PC-3 (cell line): ENCODE measurements at regions of chr12 and their contacts with region 1.

Region 1: DNA sequence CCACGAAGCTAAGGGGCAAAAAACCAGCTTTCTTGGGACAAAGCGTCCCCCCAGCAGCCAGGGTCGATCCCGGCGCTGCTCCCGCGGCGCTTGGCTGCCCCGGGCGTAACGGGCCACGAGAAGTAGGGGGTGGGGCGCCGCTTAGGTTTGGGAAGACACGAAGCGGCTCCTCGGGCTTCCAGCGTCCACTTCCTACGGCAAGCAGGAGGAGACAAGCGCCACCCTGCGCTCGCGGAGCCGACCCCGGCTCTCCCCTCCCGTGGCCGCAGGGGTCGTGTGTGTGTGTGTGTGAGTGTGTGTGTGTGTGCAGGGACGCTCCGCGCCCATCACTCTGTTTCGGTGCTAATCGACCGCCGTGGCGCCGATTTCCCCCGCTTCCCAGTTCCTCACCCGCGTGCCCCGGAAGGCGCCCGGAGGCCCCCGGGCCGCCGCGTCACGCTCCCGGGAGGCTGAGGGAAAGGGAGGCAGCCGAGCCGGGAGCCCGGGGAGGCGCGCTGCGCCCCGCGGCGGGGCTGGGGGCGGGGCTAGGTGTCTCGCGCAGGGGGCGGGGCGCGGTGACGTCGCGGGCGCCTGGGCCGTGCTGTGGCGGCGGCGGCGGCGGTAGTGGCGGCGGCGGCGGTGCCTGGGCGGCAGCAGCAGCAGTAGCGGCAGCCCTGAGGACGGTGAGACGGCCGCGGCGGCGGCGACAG is at the start of gene ERC1:
- DNase-seq: peak; percentile 73
- ATAC-seq: peak; percentile 85
- H3K4me3 ChIP-seq: peak within 1 kb of the TSS; percentile 69
- H3K27ac ChIP-seq: peak within 1 kb of the TSS; percentile 79
- H3K4me1 ChIP-seq: peaks cover 41% of the 10 kb centered on the region
- H3K27me3 ChIP-seq: no peaks in the 10 kb centered on the region
- CTCF ChIP-seq: no peak
- total RNA-seq, gene ERC1: 12.3 and 16.0 TPM in 2 replicates

Region 2: GRCh38 chr12:1047898-1048660 is 57.3 kb after region 1 on chr12:
- CTCF ChIA-PET with region 1: no interaction called
- POLR2A ChIA-PET with region 1: no interaction called
- intact Hi-C with region 1: loop called (anchors 5 kb)
- DNase-seq: no peak
- ATAC-seq: no peak
- H3K4me3 ChIP-seq: no peak overlapping the region
- H3K27ac ChIP-seq: no peak overlapping the region
- H3K4me1 ChIP-seq: peaks cover 67% of the 10 kb centered on the region
- H3K27me3 ChIP-seq: no peaks in the 10 kb centered on the region
- CTCF ChIP-seq: no peak